Astrocyte of the cerebellum (primary cell): ENCODE measurements at regions of chr7 and their contacts with region 1.

Region 1: DNA sequence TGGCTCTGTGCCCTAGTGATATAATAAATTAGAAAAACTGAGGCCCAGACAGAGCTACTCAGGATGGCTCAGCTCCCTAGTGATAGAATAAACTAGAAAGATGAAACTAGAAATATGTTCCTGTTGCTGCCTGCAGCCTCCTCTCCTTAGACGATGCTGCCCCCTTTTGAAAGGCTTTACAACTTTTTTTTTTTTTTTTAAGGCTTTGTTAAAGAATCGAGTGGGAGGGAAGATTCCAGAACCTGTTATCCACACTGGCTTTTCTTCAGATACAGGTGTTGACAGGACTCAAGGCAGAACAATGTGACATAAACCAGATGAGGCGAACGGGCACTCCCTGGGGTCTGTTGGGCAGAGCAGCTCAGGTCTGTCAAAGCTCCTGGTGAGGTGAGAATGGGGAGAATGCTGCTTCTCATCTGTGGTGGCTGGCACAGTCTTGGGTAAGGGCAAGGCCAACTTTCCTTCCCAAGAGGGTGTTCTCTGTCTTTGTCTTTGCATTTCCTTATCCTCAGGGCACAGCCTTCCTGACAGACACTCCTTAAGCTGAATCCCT is 175.1 kb downstream of the COBL start:
- DNase-seq: peak; percentile 9
- H3K4me3 ChIP-seq: no peak overlapping the region
- CTCF ChIP-seq: peak; percentile 74

Region 2: GRCh38 chr7:50497068-50497642 is 644.4 kb before region 1 on chr7:
- in situ Hi-C with region 1: loop called (anchors 25 kb)
- DNase-seq: no peak
- H3K4me3 ChIP-seq: no peak overlapping the region
- CTCF ChIP-seq: no peak

Region 3: DNA sequence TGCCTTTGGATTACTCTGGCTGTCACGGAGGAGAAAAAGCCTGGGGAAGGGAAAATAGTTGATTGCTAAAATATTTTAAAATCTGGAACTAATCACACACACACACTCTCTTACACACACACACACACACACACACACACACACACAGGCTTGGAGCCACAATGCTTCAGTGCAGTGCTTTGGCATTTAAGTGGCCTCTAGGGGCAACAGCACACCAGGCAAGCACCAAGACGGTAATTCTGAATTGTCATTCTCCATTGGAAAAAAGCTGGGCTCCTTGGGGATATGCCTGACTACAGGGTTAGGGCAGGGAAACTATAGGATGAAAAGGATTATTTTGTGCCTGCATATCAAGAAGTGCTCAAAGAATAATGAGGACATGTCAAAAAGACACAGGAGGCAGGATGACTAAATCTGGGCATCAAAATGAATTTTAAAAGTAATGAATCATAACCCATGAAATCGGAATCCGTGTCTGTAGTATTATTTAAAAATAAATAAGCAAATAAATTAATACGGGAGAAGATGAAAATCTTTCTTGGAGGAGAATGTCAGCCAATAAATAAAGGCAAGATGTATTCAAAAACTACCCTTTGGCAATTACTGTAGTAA is 545.9 kb before region 1 on chr7:
- in situ Hi-C with region 1: loop called (anchors 25 kb)
- DNase-seq: peak; percentile 31
- H3K4me3 ChIP-seq: no peak overlapping the region
- CTCF ChIP-seq: peak; percentile 75